Mammary epithelial cell (primary cell): ENCODE measurements at regions of chr1 and their contacts with region 1.

Region 1: DNA sequence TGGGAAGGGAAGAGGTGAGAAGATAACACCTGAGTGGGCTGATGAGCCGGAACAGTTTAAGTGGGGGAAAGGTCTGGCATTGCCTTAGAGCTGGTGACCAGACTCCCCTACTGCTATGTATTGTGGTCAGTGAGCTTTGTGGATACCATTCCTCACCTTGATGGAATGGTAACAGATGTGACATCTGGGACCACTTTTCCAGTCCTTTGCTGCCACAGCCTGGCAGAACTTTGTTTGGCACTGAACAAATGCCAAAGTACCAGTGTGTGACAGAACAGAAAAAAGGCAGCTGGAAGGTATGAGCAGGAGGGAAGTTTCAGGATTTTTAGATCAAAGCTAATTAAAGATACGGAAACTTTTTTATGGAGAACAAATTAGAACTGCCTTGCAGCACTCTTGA is 6.2 kb downstream of the MED8 start:
- DNase-seq: no peak
- H3K4me3 ChIP-seq: no peak overlapping the region
- H3K27ac ChIP-seq: no peak overlapping the region
- H3K4me1 ChIP-seq: peaks cover 5% of the 10 kb centered on the region
- H3K27me3 ChIP-seq: no peaks in the 10 kb centered on the region
- CTCF ChIP-seq: peak in 1 of 2 donors; percentile 39

Region 2: GRCh38 chr1:42973304-42973703 is 410.1 kb before region 1 on chr1:
- CTCF ChIA-PET with region 1: no interaction called
- dilution Hi-C with region 1: no loop called
- in situ Hi-C with region 1: no loop called
- intact Hi-C with region 1: no loop called
- DNase-seq: no peak
- H3K4me3 ChIP-seq: no peak overlapping the region
- H3K27ac ChIP-seq: no peak overlapping the region
- H3K4me1 ChIP-seq: peaks cover 1% of the 10 kb centered on the region
- H3K27me3 ChIP-seq: no peaks in the 10 kb centered on the region
- CTCF ChIP-seq: no peak

Region 3: DNA sequence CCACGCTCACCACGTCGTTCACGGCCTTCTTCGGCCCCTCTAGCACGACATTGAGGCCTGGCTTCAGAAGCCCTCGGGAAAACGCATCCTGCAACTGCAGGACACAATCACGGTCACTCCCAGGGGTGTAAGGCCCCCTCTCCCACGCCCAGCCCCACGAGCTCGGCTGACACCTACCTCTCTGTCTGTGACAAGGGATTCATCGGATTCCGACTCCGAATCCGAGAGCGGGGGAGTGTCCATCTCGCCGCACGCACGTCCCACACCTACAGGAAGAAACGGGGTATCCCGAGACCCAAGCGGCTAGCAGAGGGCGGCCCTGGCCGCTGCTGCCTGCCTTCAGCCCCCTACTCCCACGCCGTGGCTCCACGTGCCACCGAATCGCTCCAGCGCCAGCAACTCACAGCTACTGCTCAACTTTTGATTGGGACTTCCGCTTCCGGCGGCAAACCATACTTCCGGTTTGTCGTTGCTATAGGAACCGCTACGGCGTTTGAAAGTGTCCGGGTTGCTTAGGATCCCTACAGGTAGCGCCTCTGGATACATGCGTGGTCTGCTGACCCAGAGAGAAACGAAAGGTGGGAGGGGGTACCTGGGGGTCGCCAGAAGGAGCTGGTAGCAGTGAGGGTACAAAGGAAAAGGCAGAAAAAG is 211.4 kb before region 1 on chr1 and contains the starts of genes CFAP57 and EBNA1BP2:
- CTCF ChIA-PET with region 1: no interaction called
- dilution Hi-C with region 1: no loop called
- in situ Hi-C with region 1: no loop called
- intact Hi-C with region 1: no loop called
- DNase-seq: peak; percentile 92
- H3K4me3 ChIP-seq: peak within 1 kb of the TSS; percentile 56 to 100 (median 94)
- H3K27ac ChIP-seq: peak within 1 kb of the TSS; percentile 55
- H3K4me1 ChIP-seq: peaks cover 11% of the 10 kb centered on the region
- H3K27me3 ChIP-seq: no peaks in the 10 kb centered on the region
- CTCF ChIP-seq: no peak
- total RNA-seq, gene CFAP57: 0.26 to 0.50 TPM
- total RNA-seq, gene EBNA1BP2: 56.5 to 115 TPM

Region 4: DNA sequence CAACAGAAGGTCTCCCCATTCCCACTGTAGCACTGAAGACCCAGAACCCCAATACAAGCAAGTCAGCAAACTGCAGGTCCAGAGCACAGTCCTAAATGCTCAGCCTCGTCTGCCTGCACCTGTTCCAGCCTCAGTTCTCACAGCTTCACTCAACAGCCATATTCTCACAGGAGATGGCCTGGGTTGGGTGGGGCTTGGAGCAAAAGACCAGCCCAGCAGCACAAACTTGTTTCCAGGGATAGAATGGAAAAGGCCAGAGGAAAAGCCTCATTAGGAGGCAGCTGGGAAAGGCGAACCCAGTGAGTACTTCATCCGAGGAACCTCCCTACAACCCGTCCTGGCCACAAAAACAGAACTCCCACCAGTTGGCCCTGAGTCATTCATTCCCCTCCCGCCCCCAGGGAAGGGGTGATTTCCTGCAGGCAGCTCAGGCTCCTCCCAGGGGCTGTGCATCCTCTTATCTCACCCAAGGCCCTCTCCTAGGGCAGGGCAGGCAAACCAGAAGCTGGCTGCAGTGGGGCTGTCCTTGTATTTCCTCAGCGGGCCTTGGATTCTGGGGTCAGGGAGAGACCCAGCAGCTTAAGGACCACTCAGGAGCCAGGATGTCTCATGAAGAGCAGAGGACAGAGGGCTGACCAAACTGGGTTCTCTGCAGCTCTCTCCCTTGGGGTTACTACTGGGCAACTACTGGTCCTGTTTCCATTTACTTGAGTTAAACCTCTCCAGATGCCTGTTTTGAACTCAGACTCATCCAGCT is 53.3 kb before region 1 on chr1:
- CTCF ChIA-PET with region 1: no interaction called
- dilution Hi-C with region 1: loop called (anchors 5 kb)
- in situ Hi-C with region 1: no loop called
- intact Hi-C with region 1: no loop called
- DNase-seq: peak; percentile 55
- H3K4me3 ChIP-seq: no peak overlapping the region
- H3K27ac ChIP-seq: no peak overlapping the region
- H3K4me1 ChIP-seq: peaks cover 3% of the 10 kb centered on the region
- H3K27me3 ChIP-seq: no peaks in the 10 kb centered on the region
- CTCF ChIP-seq: no peak

Region 5: GRCh38 chr1:43473463-43473862 is 90.0 kb after region 1 on chr1:
- CTCF ChIA-PET with region 1: no interaction called
- dilution Hi-C with region 1: loop called (anchors 5 kb)
- in situ Hi-C with region 1: no loop called
- intact Hi-C with region 1: no loop called
- DNase-seq: no peak
- H3K4me3 ChIP-seq: no peak overlapping the region
- H3K27ac ChIP-seq: peak overlapping the region; percentile 89
- H3K4me1 ChIP-seq: peaks cover 51% of the 10 kb centered on the region
- H3K27me3 ChIP-seq: no peaks in the 10 kb centered on the region
- CTCF ChIP-seq: no peak